Tibial artery (tissue), 4 donors: ENCODE measurements at regions of chr17 and their contacts with region 1.

Region 1: GRCh38 chr17:39636927-39637736 is at the start of gene STARD3:
- DNase-seq: peak; percentile 88 to 96
- H3K4me3 ChIP-seq: peak within 1 kb of the TSS; percentile 74 to 89
- H3K27ac ChIP-seq: peak within 1 kb of the TSS; percentile 86 to 90
- H3K4me1 ChIP-seq: peaks cover 0 to 62% (median 28%) of the 10 kb centered on the region in 4 donors
- H3K27me3 ChIP-seq: peaks cover 0 to 11% of the 10 kb centered on the region in 2 donors
- CTCF ChIP-seq: no peak

Region 2: GRCh38 chr17:39671651-39672521 is 34.8 kb after region 1 on chr17:
- intact Hi-C with region 1: loop called (anchors 5 kb)
- DNase-seq: peak in 1 of 2 donors; percentile 71
- H3K4me3 ChIP-seq: no peak overlapping the region
- H3K27ac ChIP-seq: peak overlapping the region; percentile 39 to 51
- H3K4me1 ChIP-seq: peaks cover 14 to 68% (median 59%) of the 10 kb centered on the region in 4 donors
- H3K27me3 ChIP-seq: no peaks in the 10 kb centered on the region
- CTCF ChIP-seq: peak; percentile 64 to 66